Activated naive CD4-positive, alpha-beta T cell treated with anti-CD3 and anti-CD28 coated beads, Interleukin-2, amount 10 ng/mL, durations not matched to agents 7 days and 5 days (primary cell): ENCODE measurements at regions of chr13 and their contacts with region 1.

Region 1: GRCh38 chr13:50911937-50912795 is 2.6 kb downstream of the RNASEH2B start:
- DNase-seq: peak; percentile 97
- H3K4me3 Mint-ChIP-seq: peak overlapping the region; percentile 98
- H3K27ac Mint-ChIP-seq: peak overlapping the region; percentile 99
- H3K4me1 Mint-ChIP-seq: peaks cover 72% of the 10 kb centered on the region
- H3K27me3 Mint-ChIP-seq: no peaks in the 10 kb centered on the region

Region 2: DNA sequence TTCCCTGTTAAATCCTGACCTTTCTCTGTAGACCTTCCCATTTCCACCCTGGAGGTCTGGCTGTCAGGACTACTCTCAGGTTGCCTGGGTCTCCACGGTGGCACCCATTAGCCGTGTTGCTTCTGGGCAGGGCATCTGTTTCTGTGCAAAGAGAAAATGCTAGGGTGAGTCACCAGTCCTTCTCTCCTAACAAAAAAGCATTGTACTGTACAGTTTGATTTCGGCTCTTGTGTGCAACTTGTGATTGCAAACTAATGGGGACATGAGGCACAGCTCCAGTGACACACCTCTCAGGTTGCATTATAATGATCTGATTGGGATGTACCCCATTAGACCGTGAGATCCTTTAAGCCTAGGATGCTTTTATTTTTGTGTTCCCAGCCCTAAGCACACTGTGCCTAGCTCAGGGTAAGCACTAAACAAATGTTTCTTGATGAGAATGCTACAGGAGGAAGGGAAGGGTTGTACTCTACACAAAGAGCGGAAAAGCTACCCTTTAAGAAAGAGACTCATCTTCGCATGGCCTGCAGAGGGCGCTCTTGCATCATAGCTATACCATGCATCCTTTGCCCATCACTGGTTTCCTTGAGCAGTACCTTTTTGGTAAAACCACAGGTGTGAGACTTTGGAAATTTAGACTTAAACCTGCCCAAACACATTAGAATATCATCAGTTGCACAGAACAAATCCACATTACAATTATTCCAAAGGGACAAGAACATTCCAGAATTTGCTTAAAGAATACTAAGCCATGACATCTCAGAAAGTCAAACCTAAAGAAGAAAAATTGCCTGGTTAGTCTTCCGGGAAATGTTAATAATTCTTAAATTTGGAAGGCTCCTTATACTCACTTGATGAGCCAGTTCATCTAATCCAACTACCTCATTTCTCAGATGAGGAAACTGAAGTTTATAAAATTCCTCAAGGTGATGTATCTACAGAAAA is 935.6 kb before region 1 on chr13:
- CTCF ChIA-PET with region 1: interaction called, 24 read pairs
- DNase-seq: peak; percentile 83
- H3K4me3 Mint-ChIP-seq: no peak overlapping the region
- H3K27ac Mint-ChIP-seq: no peak overlapping the region
- H3K4me1 Mint-ChIP-seq: peaks cover 4% of the 10 kb centered on the region
- H3K27me3 Mint-ChIP-seq: peaks cover 7% of the 10 kb centered on the region

Region 3: DNA sequence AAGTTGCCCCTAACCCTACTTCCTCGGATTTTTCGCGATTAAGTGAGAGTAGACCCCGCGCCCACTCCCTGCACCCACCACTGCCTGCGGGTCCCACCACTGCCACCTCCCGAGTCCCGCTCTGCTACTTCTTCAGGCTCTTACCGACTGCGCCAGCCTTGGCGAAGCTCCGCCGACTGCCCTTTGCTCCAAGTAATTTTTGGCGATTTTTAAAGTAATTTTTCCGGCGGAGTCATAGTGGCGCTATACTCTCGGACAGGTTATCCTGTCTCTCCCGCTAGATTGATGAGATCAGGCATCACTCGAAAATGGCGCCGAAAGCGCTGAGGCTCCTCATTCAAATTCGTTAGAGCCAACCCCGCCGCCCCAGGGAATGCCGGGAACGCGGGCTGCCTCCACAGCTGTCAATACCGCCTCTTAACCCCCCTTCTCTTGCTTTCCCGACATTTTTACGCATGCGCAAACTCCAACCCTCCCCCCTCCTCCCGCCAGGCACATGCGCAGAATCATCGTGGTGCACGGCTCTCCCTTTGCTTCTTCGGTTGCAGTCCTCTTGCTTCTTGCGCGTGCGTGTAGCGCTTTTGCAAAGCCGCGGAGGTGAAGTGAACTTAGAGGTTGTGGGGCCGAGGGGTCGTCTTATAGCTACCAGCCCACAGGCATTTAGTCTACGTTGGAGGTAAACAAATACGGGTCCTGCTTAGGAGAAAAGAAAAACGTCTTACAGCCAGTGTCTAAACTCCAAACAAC is 830.3 kb before region 1 on chr13:
- CTCF ChIA-PET with region 1: interaction called, 33 read pairs
- DNase-seq: peak; percentile 99
- H3K4me3 Mint-ChIP-seq: peak overlapping the region; percentile 92
- H3K27ac Mint-ChIP-seq: peak overlapping the region; percentile 100
- H3K4me1 Mint-ChIP-seq: peaks cover 50% of the 10 kb centered on the region
- H3K27me3 Mint-ChIP-seq: no peaks in the 10 kb centered on the region

Region 4: DNA sequence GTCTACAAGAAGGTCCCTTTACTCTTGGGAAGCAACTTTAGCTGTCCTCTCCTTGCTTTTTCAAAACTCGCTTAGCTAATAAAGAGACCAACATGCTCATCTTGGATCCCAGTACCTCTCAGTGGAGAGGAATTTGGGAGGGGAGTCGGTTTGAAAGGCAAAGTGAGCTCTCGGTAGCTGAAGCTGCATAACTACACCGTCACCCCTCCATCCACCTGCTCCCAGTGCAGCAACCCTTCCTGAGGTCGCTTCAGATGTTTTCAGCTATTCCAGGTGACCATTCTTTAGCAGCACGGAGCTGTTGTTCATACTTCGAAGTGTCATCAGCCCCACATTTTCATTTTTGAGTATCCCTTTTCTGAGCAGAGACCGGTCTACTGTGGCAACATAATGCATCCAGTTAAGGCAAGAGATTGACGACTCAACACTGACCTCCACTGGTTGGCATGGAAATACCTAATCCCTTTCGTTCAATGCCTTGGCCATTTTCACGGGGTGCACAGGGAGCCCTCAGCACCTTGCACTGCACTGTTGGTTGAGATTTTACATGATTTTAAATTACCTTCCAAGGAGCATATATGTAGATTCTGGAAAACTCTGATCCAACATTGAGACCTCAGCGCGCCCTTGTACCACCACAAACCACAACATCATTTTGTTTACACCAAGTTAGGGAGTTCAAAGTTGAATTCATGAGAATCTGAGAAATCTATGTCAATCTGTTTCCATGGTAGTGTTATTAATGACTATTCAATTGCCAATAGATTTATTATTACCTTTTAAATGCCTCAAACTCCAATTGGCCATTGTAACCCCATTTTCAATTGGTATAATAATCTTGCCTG is 110.9 kb before region 1 on chr13:
- CTCF ChIA-PET with region 1: interaction called, 24 read pairs
- DNase-seq: peak; percentile 80
- H3K4me3 Mint-ChIP-seq: no peak overlapping the region
- H3K27ac Mint-ChIP-seq: no peak overlapping the region
- H3K4me1 Mint-ChIP-seq: peaks cover 12% of the 10 kb centered on the region
- H3K27me3 Mint-ChIP-seq: peaks cover 16% of the 10 kb centered on the region

Region 5: GRCh38 chr13:51070005-51070649 is 158.0 kb after region 1 on chr13:
- CTCF ChIA-PET with region 1: interaction called, 14 read pairs
- DNase-seq: peak; percentile 88
- H3K4me3 Mint-ChIP-seq: no peak overlapping the region
- H3K27ac Mint-ChIP-seq: peak overlapping the region; percentile 30
- H3K4me1 Mint-ChIP-seq: peaks cover 35% of the 10 kb centered on the region
- H3K27me3 Mint-ChIP-seq: peaks cover 22% of the 10 kb centered on the region